Left cardiac atrium (tissue), 4 donors: ENCODE measurements at regions of chr1 and their contacts with region 1.

Region 1: DNA sequence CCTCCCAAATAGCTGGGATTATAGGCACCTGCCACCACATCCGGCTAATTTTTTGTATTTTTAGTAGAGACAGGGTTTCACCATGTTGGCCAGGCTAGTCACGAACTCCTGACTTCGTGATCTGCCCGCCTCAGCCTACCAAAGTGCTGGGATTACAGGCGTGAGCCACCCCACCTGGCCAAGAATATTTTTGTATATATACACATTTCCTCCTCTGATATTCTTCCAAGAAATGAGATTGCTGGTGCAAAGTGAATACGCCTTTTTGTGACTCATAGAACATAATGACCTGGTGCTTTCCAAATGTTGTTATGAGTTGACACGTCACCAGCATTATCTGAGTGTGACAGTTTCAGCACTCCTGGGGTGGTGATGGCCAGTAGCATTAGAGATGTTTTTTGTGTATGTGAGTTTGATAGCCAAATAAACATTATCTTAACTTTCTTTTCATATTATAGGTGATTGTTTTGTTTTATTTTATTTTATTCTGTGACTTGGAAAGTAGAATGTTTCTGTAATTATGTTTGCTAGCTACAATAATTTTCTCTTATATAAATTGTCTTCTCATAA is 54.9 kb downstream of the KCNK1 start:
- DNase-seq: no peak
- ATAC-seq: peak; percentile 64 to 75

Region 2: GRCh38 chr1:233566886-233567285 is 101.9 kb before region 1 on chr1:
- intact Hi-C with region 1: no loop called
- DNase-seq: no peak
- ATAC-seq: no peak

Region 3: DNA sequence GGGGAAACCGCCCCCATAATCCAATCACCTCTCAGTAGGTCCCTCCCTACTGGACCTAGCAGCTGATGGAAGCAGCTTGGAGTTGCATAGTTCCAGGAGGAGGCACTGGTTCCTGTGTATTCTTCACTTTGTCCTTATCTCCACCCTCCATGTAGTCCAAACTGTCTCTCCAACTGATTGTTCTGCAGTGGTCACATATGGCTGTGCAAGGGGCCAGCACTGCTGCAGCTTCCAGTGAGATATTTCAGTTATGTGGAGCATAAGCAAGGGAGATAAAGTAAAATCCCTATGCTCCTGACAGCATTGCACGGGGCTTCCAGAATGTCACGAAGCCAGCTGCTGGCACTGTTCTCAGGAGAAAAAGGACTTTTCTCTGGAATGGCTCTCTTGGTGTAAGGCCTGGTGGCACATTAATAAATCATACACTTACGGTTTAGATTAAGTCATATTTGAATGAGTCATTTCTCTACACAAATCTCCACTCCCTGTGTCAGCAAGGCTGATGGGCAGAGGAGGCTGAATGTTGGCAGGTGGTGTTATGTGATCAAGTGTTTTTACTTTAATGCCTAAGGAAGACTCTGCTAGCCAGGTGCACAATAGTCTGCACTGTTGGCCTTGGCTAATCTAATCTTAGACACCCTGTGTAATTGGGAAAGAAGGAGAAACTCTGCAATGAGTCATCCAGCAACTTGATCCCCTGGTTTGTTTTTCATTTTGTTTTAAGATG is 38.5 kb after region 1 on chr1:
- intact Hi-C with region 1: no loop called
- DNase-seq: no peak
- ATAC-seq: peak; percentile 71 to 95

Region 4: GRCh38 chr1:233722212-233722979 is 53.6 kb after region 1 on chr1:
- intact Hi-C with region 1: loop called in 1 of 2 experiments (anchors 2 kb)
- DNase-seq: no peak
- ATAC-seq: peak; percentile 37 to 45